Colonic mucosa (tissue), 4 donors: ENCODE measurements at regions of chr6 and their contacts with region 1.

Region 1: GRCh38 chr6:122530440-122531046 is 58.9 kb upstream of the SERINC1 start:
- DNase-seq: peak; percentile 74
- H3K4me3 ChIP-seq: no peak overlapping the region
- H3K27ac ChIP-seq: no peak overlapping the region
- H3K4me1 ChIP-seq: no peaks in the 10 kb centered on the region
- H3K27me3 ChIP-seq: no peaks in the 10 kb centered on the region
- CTCF ChIP-seq: peak; percentile 75

Region 2: DNA sequence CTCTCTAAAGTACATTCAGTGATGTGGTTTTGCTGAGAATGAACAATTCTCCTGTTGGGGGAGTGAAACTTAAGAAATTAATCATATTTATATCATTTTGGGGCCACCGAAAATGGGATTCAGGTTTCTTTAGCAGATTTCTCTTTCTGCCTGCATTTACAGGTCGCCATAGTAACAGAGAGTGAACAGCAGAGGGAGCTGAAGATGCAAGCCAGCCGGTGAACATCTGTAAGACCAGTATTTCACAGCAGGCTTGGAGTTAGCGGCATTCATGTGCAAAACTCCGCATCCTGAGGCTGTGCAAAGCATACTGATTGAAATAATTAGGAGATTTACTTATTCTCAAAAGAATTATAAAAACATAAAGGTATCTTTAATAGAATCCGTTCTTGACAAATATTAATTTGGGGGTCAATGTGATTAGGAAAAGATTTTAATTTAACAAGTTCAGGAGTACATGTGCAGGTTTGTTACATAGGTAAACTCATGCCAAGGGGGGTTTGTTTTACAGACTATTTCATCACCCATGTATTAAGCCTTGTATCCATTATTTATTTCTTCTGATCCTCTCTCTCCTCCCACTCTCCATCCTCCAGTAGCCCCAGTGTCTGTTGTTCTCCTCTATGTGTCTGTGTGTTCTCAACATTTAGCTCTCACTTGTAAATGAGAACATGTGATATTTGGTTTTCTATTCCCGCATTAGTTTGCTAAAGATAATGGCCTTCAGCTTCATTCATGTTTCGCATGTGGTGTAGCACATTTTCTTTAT is 148.9 kb before region 1 on chr6:
- intact Hi-C with region 1: loop called (anchors 2 kb)
- DNase-seq: peak; percentile 41
- H3K4me3 ChIP-seq: no peak overlapping the region
- H3K27ac ChIP-seq: no peak overlapping the region
- H3K4me1 ChIP-seq: no peaks in the 10 kb centered on the region
- H3K27me3 ChIP-seq: no peaks in the 10 kb centered on the region
- CTCF ChIP-seq: peak; percentile 57

Region 3: GRCh38 chr6:122476131-122476530 is 54.4 kb before region 1 on chr6:
- intact Hi-C with region 1: loop called (anchors 5 kb)
- DNase-seq: no peak
- H3K4me3 ChIP-seq: no peak overlapping the region
- H3K27ac ChIP-seq: no peak overlapping the region
- H3K4me1 ChIP-seq: no peaks in the 10 kb centered on the region
- H3K27me3 ChIP-seq: no peaks in the 10 kb centered on the region
- CTCF ChIP-seq: peak; percentile 9

Region 4: GRCh38 chr6:122491919-122492555 is 38.5 kb before region 1 on chr6:
- intact Hi-C with region 1: loop called (anchors 5 kb)
- DNase-seq: peak; percentile 79
- H3K4me3 ChIP-seq: no peak overlapping the region
- H3K27ac ChIP-seq: no peak overlapping the region
- H3K4me1 ChIP-seq: no peaks in the 10 kb centered on the region
- H3K27me3 ChIP-seq: no peaks in the 10 kb centered on the region
- CTCF ChIP-seq: peak; percentile 73